ENCODE measurements at regions of chr18 and their contacts with region 1.

Region 1: GRCh38 chr18:23623040-23623439 is 36.7 kb upstream of the NPC1 start:
- DNase-seq: peak; percentile 70
- H3K4me3 ChIP-seq: no peak overlapping the region
- H3K27ac ChIP-seq: no peak overlapping the region
- H3K4me1 ChIP-seq: peaks cover 11 to 19% of the 10 kb centered on the region in 2 experiments; a peak in 3 of 4 replicates
- H3K27me3 ChIP-seq: no peaks in the 10 kb centered on the region
- CTCF ChIP-seq: no peak
- EP300 ChIP-seq: peak in 1 of 2 experiments; percentile 88; a peak in 2 of 4 replicates
- RAD21 ChIP-seq: no peak

Region 2: GRCh38 chr18:23356915-23357601 is 266.0 kb before region 1 on chr18:
- CTCF ChIA-PET with region 1: no interaction called
- POLR2A ChIA-PET with region 1: no interaction called
- DNase-seq: no peak
- H3K4me3 ChIP-seq: no peak overlapping the region
- H3K27ac ChIP-seq: no peak overlapping the region
- H3K4me1 ChIP-seq: peaks cover 0 to 10% of the 10 kb centered on the region in 2 experiments; a peak in 2 of 4 replicates
- H3K27me3 ChIP-seq: no peaks in the 10 kb centered on the region
- CTCF ChIP-seq: no peak
- EP300 ChIP-seq: no peak
- RAD21 ChIP-seq: no peak

Region 3: DNA sequence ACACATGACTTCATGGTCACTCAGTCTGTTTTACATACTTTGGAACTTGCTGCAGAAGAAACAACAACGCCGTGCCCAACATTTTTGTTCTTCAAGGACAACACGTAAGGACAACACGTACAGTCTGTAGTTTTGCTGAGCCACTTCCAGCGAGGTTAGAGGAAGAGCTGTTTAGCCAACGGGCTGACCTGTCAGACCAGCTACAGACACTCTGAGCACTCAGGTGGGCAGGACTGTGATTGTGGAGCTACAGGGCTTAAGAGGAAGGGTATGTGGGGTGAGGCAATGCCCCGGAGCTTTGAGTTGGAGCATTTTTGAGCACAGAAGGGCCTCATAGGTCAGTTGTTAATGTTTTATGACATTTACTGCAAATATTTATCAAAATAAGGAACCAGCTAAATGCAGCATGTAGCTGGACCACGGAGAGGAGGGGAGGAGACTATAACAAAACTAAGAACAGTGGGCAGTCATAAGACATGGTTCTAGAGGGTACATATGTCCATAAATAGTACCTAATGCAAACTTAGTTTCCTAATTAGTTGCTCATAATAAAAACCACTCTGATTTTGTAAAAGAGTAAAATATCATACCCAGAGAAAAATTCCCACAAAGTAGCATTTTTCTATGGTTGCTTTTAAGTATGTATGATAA is 10.5 kb before region 1 on chr18:
- CTCF ChIA-PET with region 1: interaction called, 16 read pairs
- POLR2A ChIA-PET with region 1: no interaction called
- DNase-seq: no peak
- H3K4me3 ChIP-seq: no peak overlapping the region
- H3K27ac ChIP-seq: no peak overlapping the region
- H3K4me1 ChIP-seq: no peaks in the 10 kb centered on the region
- H3K27me3 ChIP-seq: no peaks in the 10 kb centered on the region
- CTCF ChIP-seq: no peak
- EP300 ChIP-seq: no peak
- RAD21 ChIP-seq: no peak

Region 4: GRCh38 chr18:23682472-23682871 is 59.4 kb after region 1 on chr18:
- CTCF ChIA-PET with region 1: interaction called, 10 read pairs
- POLR2A ChIA-PET with region 1: no interaction called
- DNase-seq: no peak
- H3K4me3 ChIP-seq: no peak overlapping the region
- H3K27ac ChIP-seq: no peak overlapping the region
- H3K4me1 ChIP-seq: peaks cover 0 to 3% of the 10 kb centered on the region in 2 experiments; a peak in 1 of 4 replicates
- H3K27me3 ChIP-seq: no peaks in the 10 kb centered on the region
- CTCF ChIP-seq: no peak
- EP300 ChIP-seq: no peak
- RAD21 ChIP-seq: no peak

Region 5: DNA sequence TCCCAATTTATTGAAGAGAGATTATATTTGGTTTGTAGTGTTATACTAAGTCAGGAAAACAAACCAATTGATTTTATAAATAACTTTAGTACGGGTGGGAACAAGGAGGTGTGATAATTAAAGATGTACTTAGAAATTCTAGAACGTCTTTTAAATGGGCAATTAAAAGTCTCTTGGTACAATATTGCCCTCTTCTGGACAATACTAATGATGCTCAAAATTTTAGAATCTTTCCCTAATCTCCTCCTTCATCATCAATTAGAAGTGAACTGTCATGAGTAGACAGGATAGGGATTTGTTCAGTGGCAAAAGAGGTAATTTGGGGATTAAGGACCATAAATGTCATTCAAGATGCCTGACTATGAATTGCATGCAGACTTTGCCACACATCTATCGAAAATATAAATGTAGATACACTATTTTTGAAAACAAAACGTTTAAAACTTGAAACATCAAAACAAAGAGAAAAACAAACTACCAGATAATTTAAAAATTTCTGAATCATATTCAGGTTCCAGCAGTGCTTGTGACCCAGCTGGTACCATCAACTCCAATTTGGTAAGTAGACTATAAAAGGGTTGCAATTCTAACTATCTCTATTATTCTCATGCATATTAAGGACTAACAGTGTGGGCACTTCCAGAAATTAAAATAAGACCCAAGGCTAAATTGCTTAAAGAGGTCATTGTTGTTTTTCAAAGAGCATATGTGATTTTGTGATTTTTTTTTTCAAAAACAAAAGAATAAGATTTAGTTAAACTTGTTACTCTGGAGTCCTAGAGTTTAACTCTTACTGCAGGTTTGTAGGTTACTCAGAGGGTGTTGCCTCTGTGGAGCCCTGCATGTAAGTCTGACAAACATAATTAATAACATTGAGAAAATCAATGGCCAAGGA is 189.8 kb after region 1 on chr18:
- CTCF ChIA-PET with region 1: interaction called, 30 read pairs
- POLR2A ChIA-PET with region 1: no interaction called
- DNase-seq: peak; percentile 34
- H3K4me3 ChIP-seq: no peak overlapping the region
- H3K27ac ChIP-seq: no peak overlapping the region
- H3K4me1 ChIP-seq: peaks cover 0 to 6% of the 10 kb centered on the region in 2 experiments; a peak in 2 of 4 replicates
- H3K27me3 ChIP-seq: no peaks in the 10 kb centered on the region
- CTCF ChIP-seq: peak; percentile 77
- EP300 ChIP-seq: no peak
- RAD21 ChIP-seq: peak; percentile 76